Calu3 (cell line): ENCODE measurements at regions of chr12 and their contacts with region 1.

Region 1: GRCh38 chr12:69070319-69071090 is 137.5 kb upstream of the CPM start:
- DNase-seq: peak; percentile 76
- H3K4me3 Mint-ChIP-seq: no peak overlapping the region
- H3K27ac Mint-ChIP-seq: no peak overlapping the region
- H3K4me1 Mint-ChIP-seq: peaks cover 49% of the 10 kb centered on the region
- H3K27me3 Mint-ChIP-seq: no peaks in the 10 kb centered on the region
- CTCF ChIP-seq: peak; percentile 76

Region 2: DNA sequence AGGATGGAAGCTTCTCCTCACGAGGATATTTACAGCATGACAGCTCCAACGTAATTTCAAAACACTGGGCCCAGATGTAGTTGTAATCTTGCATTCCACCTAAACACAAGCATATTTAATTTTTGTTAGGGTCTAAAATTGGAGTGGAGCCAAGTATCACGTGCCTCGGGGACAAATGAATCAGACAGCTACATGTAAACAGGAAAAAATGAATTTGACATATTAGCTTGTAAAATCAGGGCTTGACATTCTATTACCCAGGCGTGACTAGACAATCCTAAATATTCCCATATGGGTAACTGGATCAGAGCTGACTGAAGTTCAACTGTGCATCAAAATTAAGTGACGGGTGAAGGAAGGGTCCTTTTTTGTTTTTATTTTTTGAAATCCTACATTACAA is 203.6 kb before region 1 on chr12:
- CTCF ChIA-PET with region 1: no interaction called
- intact Hi-C with region 1: loop called (anchors 2 kb)
- DNase-seq: no peak
- H3K4me3 Mint-ChIP-seq: no peak overlapping the region
- H3K27ac Mint-ChIP-seq: no peak overlapping the region
- H3K4me1 Mint-ChIP-seq: no peaks in the 10 kb centered on the region
- H3K27me3 Mint-ChIP-seq: no peaks in the 10 kb centered on the region
- CTCF ChIP-seq: no peak

Region 3: GRCh38 chr12:68899251-68899771 is 171.2 kb before region 1 on chr12:
- CTCF ChIA-PET with region 1: interaction called, 8 read pairs
- intact Hi-C with region 1: loop called (anchors 1 kb)
- DNase-seq: peak; percentile 79
- H3K4me3 Mint-ChIP-seq: no peak overlapping the region
- H3K27ac Mint-ChIP-seq: no peak overlapping the region
- H3K4me1 Mint-ChIP-seq: peaks cover 23% of the 10 kb centered on the region
- H3K27me3 Mint-ChIP-seq: no peaks in the 10 kb centered on the region
- CTCF ChIP-seq: peak; percentile 45

Region 4: GRCh38 chr12:68971351-68971772 is 99.1 kb before region 1 on chr12:
- CTCF ChIA-PET with region 1: interaction called, 3 read pairs
- intact Hi-C with region 1: loop called (anchors 5 kb)
- DNase-seq: no peak
- H3K4me3 Mint-ChIP-seq: no peak overlapping the region
- H3K27ac Mint-ChIP-seq: peak overlapping the region; percentile 50
- H3K4me1 Mint-ChIP-seq: peaks cover 52% of the 10 kb centered on the region
- H3K27me3 Mint-ChIP-seq: no peaks in the 10 kb centered on the region
- CTCF ChIP-seq: no peak

Region 5: DNA sequence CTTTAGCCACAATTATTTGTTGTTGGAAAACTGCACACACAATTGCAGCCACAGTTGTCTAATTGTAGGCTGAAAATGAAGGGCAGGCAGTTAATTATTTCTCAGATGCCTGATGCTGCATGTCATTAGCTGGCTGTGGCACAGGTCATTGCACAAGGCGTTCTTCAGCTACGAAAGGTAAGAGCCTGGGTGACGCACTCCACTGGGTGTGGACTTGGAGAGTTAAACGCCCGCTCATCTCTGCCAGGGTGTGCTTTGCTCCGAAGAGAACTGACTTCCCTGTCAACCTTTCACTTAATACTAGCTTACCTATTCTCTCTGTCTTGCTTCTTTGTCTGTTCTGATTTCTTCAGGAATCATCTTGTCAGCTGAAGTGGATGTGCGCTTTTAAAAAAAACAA is 46.1 kb before region 1 on chr12:
- CTCF ChIA-PET with region 1: interaction called, 3 read pairs
- intact Hi-C with region 1: loop called (anchors 2 kb)
- DNase-seq: peak; percentile 90
- H3K4me3 Mint-ChIP-seq: peak overlapping the region; percentile 5
- H3K27ac Mint-ChIP-seq: peak overlapping the region; percentile 75
- H3K4me1 Mint-ChIP-seq: peaks cover 37% of the 10 kb centered on the region
- H3K27me3 Mint-ChIP-seq: no peaks in the 10 kb centered on the region
- CTCF ChIP-seq: no peak

Region 6: GRCh38 chr12:69052613-69053408 is 17.7 kb before region 1 on chr12:
- CTCF ChIA-PET with region 1: interaction called, 22 read pairs
- intact Hi-C with region 1: loop called (anchors 2 kb)
- DNase-seq: peak; percentile 88
- H3K4me3 Mint-ChIP-seq: no peak overlapping the region
- H3K27ac Mint-ChIP-seq: peak overlapping the region; percentile 81
- H3K4me1 Mint-ChIP-seq: peaks cover 25% of the 10 kb centered on the region
- H3K27me3 Mint-ChIP-seq: no peaks in the 10 kb centered on the region
- CTCF ChIP-seq: peak; percentile 14

Region 7: GRCh38 chr12:69266036-69266635 is 195.6 kb after region 1 on chr12:
- CTCF ChIA-PET with region 1: no interaction called
- intact Hi-C with region 1: no loop called
- DNase-seq: no peak
- H3K4me3 Mint-ChIP-seq: no peak overlapping the region
- H3K27ac Mint-ChIP-seq: peak overlapping the region; percentile 86
- H3K4me1 Mint-ChIP-seq: peaks cover 11% of the 10 kb centered on the region
- H3K27me3 Mint-ChIP-seq: no peaks in the 10 kb centered on the region
- CTCF ChIP-seq: no peak